H1 (cell line): ENCODE measurements at regions of chr3 and their contacts with region 1.

Region 1: DNA sequence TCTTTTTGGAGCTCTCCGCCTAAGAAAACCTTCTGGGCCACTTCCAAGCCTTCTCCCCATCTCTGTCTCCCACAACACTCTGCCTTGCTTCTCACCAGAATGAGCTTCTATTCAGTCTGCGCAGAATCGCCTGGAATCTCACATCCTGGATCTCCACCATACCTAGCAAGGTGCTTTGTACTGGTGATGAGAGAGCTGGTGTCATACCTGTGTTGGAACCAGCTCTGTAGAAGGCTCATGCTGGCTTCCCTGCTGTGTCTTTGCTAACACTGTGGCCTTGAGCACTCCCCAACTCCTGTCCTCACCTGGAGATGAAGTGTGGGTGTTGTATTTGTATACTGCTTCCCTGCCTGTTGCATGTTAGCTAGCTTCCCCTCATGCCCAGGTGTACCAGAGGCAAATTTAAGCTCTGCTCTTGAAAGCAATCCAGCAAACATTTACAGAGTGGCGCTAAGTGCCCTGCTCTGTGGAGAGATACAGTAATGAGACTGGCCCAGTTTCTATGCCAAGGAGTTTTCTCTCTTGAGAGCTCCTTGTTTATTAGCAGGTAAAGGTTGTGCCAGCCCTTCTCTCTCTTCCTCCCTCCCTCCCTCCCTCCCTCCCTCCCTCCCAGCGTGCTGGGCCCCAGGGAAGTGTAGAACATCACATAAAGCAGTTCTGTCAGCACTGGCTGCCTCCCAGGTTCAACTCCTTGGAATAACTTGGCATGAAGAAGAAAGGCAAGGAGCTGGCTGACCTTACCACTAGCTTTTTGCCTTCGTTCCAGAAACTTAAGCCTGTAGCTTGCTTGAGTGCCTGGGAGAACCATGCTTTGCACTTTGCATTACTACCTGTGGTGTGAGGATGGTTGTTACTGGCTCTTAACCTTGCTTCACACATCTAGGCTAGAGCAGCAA is 54.9 kb downstream of the TRIM71 start:
- DNase-seq: no peak
- H3K4me3 ChIP-seq: peak overlapping the region in 1 of 4 experiments; percentile 22; a peak in 1 of 8 replicates
- H3K27ac ChIP-seq: 0 out of 2 replicates have a peak overlapping the region, but pooled peaks have one; percentile 2
- H3K4me1 ChIP-seq: peaks cover 27 to 51% (median 46%) of the 10 kb centered on the region in 4 experiments
- H3K27me3 ChIP-seq: no peaks in the 10 kb centered on the region
- CTCF ChIP-seq: no peak
- EP300 ChIP-seq: no peak
- POLR2A ChIP-seq: no peak; a peak in 2 of 3 replicates
- RAD21 ChIP-seq: no peak

Region 2: GRCh38 chr3:32706348-32707025 is 166.2 kb before region 1 on chr3:
- CTCF ChIA-PET with region 1: no interaction called
- POLR2A ChIA-PET with region 1: no interaction called
- DNase-seq: no peak
- H3K4me3 ChIP-seq: no peak overlapping the region
- H3K27ac ChIP-seq: no peak overlapping the region
- H3K4me1 ChIP-seq: no peaks in the 10 kb centered on the region
- H3K27me3 ChIP-seq: no peaks in the 10 kb centered on the region
- CTCF ChIP-seq: no peak
- EP300 ChIP-seq: no peak
- POLR2A ChIP-seq: no peak
- RAD21 ChIP-seq: no peak

Region 3: GRCh38 chr3:32816439-32817256 is 56.1 kb before region 1 on chr3:
- CTCF ChIA-PET with region 1: interaction called, 13 read pairs
- POLR2A ChIA-PET with region 1: interaction called, 72 read pairs
- DNase-seq: peak; percentile 82 to 94
- H3K4me3 ChIP-seq: peak overlapping the region; percentile 88 to 98 (median 94)
- H3K27ac ChIP-seq: peak overlapping the region; percentile 95
- H3K4me1 ChIP-seq: peaks cover 9 to 27% (median 11%) of the 10 kb centered on the region in 4 experiments; a peak in 6 of 7 replicates
- H3K27me3 ChIP-seq: no peaks in the 10 kb centered on the region
- CTCF ChIP-seq: no peak
- EP300 ChIP-seq: peak in 1 of 2 experiments; percentile 19; a peak in 1 of 3 replicates
- POLR2A ChIP-seq: peak in 1 of 2 experiments; percentile 33; a peak in 1 of 3 replicates
- RAD21 ChIP-seq: no peak; a peak in 1 of 4 replicates

Region 4: DNA sequence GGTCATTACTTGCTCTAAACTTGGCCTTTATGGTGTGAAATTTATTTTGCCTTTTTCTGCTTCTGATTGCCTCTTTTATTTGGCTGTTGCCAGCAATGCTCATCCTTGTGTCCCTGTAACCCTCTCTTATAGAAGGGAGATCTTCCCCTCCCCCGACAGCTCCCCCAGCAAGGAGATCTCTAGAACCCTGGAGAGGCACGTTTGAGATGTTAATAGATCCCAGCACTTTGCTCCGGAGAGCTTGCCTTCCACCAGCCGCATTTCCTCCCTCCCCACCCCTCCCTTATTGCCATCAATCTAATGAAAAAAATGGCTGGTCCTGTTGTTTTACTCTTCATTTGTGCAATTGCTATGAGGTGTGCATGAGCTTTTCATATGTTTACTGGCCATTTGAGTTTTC is 36.8 kb before region 1 on chr3:
- CTCF ChIA-PET with region 1: interaction called, 5 read pairs
- POLR2A ChIA-PET with region 1: interaction called, 104 read pairs
- DNase-seq: peak in 1 of 2 experiments; percentile 73
- H3K4me3 ChIP-seq: peak overlapping the region; percentile 17 to 57 (median 37); a peak in 6 of 8 replicates
- H3K27ac ChIP-seq: no peak overlapping the region
- H3K4me1 ChIP-seq: peaks cover 26 to 55% (median 37%) of the 10 kb centered on the region in 4 experiments
- H3K27me3 ChIP-seq: no peaks in the 10 kb centered on the region
- CTCF ChIP-seq: no peak
- EP300 ChIP-seq: peak in 1 of 2 experiments; percentile 62; a peak in 1 of 3 replicates
- POLR2A ChIP-seq: peak in 1 of 2 experiments; percentile 67; a peak in 2 of 3 replicates
- RAD21 ChIP-seq: peak in 1 of 2 experiments; percentile 10; a peak in 1 of 4 replicates

Region 5: DNA sequence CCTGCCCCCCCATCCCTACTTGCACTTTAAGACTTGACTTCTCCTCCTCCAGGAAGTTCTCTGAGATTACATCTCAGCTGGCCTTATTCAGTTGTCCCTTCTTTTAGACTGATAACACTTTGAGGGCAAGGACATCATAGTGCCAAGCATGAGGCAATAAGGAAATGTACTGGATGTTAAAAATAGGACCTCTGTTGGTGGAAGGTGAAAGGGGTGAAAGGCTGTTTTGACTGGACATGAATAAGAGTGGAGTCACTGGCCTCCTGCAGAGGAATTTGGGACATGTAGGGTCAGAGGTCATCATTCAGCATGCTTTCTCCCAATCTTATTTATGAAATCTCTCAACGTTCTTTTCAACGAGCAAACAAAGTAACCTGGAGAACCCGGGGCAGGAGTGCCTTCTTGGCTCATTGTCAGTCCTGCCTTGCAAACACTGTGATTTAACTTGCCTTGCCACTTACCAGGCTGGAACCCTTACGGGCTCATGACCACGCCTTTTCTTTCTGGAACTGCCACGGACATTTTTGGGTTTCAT is 16.3 kb before region 1 on chr3:
- CTCF ChIA-PET with region 1: interaction called, 12 read pairs
- POLR2A ChIA-PET with region 1: interaction called, 10 read pairs
- DNase-seq: no peak
- H3K4me3 ChIP-seq: no peak overlapping the region
- H3K27ac ChIP-seq: no peak overlapping the region
- H3K4me1 ChIP-seq: peaks cover 32 to 63% (median 43%) of the 10 kb centered on the region in 4 experiments
- H3K27me3 ChIP-seq: no peaks in the 10 kb centered on the region; a peak in 1 of 7 replicates
- CTCF ChIP-seq: no peak
- EP300 ChIP-seq: no peak
- POLR2A ChIP-seq: no peak
- RAD21 ChIP-seq: no peak

Region 6: DNA sequence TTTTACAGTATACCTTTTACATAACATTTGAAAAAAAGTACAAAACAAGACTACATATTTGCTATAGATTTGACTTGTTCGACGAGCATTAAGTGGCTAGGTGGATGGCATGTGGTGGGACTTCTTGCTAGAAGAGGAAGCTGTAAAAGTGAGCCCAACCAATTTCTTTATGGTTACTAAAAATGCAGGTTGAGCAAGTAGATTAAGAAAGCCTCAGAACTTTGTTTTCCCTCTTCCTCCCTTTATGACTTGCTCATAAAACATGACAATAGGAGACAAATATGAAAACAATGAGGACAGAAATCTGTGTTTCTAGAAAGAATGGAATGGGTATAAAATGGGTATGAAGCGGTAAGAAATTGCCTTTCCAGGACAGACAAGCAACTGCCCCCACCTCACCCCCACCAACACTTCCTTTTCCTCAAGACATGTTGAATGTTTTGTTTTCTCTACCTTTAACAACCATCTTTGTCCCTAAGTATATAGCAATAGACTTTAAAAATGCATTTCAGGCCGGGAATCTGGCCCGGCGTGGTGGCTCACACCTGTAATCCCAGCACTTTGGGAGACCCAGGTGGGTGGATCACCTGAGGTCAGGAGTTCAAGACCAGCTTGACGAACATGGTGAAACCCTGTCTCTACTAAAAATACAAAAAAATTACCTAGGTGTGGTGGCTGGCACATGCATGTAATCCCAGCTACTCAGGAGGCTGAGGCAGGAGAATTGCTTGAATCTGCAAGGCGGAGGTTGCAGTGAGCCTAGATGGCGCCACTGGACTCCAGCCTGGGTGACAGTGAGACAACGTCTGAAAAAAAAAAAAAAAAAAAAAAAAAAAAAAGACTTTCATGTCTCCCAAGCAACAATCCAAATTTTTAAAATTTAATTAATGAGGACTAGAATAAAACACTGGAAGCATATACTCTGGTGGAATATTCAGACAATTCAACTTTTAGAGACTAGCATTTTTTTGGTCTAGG is 29.0 kb after region 1 on chr3:
- CTCF ChIA-PET with region 1: interaction called, 18 read pairs
- POLR2A ChIA-PET with region 1: interaction called, 9 read pairs
- DNase-seq: peak in 1 of 2 experiments; percentile 62
- H3K4me3 ChIP-seq: peak overlapping the region in 3 of 4 experiments; percentile 30 to 40 (median 31); a peak in 4 of 8 replicates
- H3K27ac ChIP-seq: no peak overlapping the region
- H3K4me1 ChIP-seq: no peaks in the 10 kb centered on the region
- H3K27me3 ChIP-seq: no peaks in the 10 kb centered on the region
- CTCF ChIP-seq: peak; percentile 26 to 41 (median 37); a peak in 3 of 4 replicates
- EP300 ChIP-seq: no peak
- POLR2A ChIP-seq: peak in 1 of 2 experiments; percentile 69; a peak in 1 of 3 replicates
- RAD21 ChIP-seq: peak in 1 of 2 experiments; percentile 6; a peak in 1 of 4 replicates

Region 7: GRCh38 chr3:32951410-32951811 is 78.7 kb after region 1 on chr3 and contains the start of gene CCR4:
- CTCF ChIA-PET with region 1: no interaction called
- POLR2A ChIA-PET with region 1: no interaction called
- DNase-seq: peak in 1 of 2 experiments; percentile 36
- H3K4me3 ChIP-seq: no peak within 1 kb of the TSS
- H3K27ac ChIP-seq: no peak within 1 kb of the TSS
- H3K4me1 ChIP-seq: peaks cover 0 to 4% (median 1%) of the 10 kb centered on the region in 4 experiments; a peak in 2 of 7 replicates
- H3K27me3 ChIP-seq: no peaks in the 10 kb centered on the region
- CTCF ChIP-seq: no peak
- EP300 ChIP-seq: no peak
- POLR2A ChIP-seq: no peak
- RAD21 ChIP-seq: no peak
- total RNA-seq, gene CCR4: 0.10 and 0.11 TPM in 2 replicates